ENCODE measurements at regions of chr1 and their contacts with region 1.

Region 1: GRCh38 chr1:228734881-228735801 is at the start of gene RHOU:
- DNase-seq: peak; percentile 58 to 80 (median 72)
- H3K4me3 ChIP-seq: peak within 1 kb of the TSS; percentile 37 to 67
- H3K4me3 Mint-ChIP-seq: peak within 1 kb of the TSS; percentile 89 to 96 (median 92)
- H3K27ac ChIP-seq: peak within 1 kb of the TSS; percentile 37
- H3K27ac Mint-ChIP-seq: peak within 1 kb of the TSS; percentile 8 to 88 (median 81)
- H3K4me1 ChIP-seq: peaks cover 32% of the 10 kb centered on the region
- H3K4me1 Mint-ChIP-seq: peaks cover 18 to 38% (median 29%) of the 10 kb centered on the region in 4 donors
- H3K27me3 ChIP-seq: no peaks in the 10 kb centered on the region
- H3K27me3 Mint-ChIP-seq: peaks cover 0 to 2% of the 10 kb centered on the region in 2 donors
- total RNA-seq, gene RHOU: 3.4 to 4.1 TPM

Region 2: DNA sequence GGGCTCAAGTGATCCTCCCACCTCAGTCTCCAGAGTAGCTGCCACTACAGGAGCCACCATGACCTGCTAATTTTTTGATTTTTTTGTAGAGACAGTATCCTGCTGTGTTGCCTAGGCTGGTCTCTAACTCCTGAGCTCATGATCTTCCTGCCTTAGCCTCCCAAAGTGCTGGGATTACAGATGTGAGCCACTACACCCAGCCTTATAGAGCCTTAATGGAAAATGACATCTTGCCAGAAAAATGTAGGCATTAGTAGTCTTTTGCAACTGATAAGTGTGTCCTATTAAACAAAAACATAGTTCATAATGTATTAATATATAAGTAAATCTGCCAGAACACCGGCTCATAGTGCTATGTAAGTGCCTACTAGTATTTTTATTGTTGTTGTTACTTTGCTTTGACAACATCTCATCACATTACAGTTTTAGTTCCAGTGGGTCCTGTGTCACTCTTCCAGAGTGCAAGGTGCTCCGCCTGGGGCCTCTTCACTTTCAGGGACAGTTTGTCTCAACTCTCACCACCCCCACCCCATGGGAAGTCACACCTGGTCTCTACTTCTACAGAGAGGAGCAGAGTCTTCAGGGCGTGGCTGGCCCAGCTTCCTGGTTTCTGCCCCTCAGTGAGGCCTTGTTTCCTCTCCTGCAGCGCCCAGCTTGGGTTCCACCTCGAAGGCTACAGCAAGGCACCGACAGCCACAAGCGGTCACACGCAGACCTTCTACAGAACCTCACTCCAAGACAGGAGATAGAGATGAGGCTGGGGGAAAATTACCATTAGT is 30.2 kb after region 1 on chr1:
- CTCF ChIA-PET with region 1: interaction called, 3 read pairs
- POLR2A ChIA-PET with region 1: interaction called, 7 read pairs
- intact Hi-C with region 1: loop called (anchors 2 kb)
- DNase-seq: peak in 4 of 5 donors; percentile 13 to 21 (median 18)
- H3K4me3 ChIP-seq: no peak overlapping the region
- H3K4me3 Mint-ChIP-seq: peak overlapping the region in 6 of 8 donors; percentile 25 to 67 (median 48)
- H3K27ac ChIP-seq: no peak overlapping the region
- H3K27ac Mint-ChIP-seq: peak overlapping the region; percentile 43 to 86 (median 76)
- H3K4me1 ChIP-seq: peaks cover 14% of the 10 kb centered on the region
- H3K4me1 Mint-ChIP-seq: peaks cover 8 to 22% (median 17%) of the 10 kb centered on the region in 4 donors
- H3K27me3 ChIP-seq: no peaks in the 10 kb centered on the region
- H3K27me3 Mint-ChIP-seq: no peaks in the 10 kb centered on the region

Region 3: DNA sequence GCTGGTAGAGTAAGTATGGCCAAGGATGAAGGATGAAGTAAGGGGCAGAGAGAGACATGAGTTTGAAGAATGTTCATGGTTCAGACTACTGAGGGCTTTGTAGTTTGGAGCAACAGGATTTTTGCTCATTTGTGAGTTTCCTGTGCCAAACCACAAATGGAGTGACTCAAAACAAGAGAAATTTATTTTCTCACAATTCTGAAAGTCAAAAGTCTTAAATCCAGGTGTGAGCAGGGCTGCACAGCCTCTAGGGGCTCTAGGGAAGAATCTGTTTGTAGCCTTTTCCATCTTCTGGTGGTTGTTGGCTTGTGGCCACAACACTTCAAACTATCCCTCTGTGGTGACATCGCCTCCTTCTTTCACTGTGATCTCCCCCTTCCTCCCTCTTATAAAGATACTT is 59.0 kb after region 1 on chr1:
- CTCF ChIA-PET with region 1: interaction called, 14 read pairs
- POLR2A ChIA-PET with region 1: interaction called, 3 read pairs
- intact Hi-C with region 1: loop called (anchors 5 kb)
- DNase-seq: peak in 4 of 5 donors; percentile 18 to 42 (median 28)
- H3K4me3 ChIP-seq: peak overlapping the region in 1 of 2 donors; percentile 13
- H3K4me3 Mint-ChIP-seq: no peak overlapping the region
- H3K27ac ChIP-seq: no peak overlapping the region
- H3K27ac Mint-ChIP-seq: no peak overlapping the region
- H3K4me1 ChIP-seq: peaks cover 55% of the 10 kb centered on the region
- H3K4me1 Mint-ChIP-seq: peaks cover 13 to 21% (median 16%) of the 10 kb centered on the region in 4 donors
- H3K27me3 ChIP-seq: no peaks in the 10 kb centered on the region
- H3K27me3 Mint-ChIP-seq: no peaks in the 10 kb centered on the region

Region 4: DNA sequence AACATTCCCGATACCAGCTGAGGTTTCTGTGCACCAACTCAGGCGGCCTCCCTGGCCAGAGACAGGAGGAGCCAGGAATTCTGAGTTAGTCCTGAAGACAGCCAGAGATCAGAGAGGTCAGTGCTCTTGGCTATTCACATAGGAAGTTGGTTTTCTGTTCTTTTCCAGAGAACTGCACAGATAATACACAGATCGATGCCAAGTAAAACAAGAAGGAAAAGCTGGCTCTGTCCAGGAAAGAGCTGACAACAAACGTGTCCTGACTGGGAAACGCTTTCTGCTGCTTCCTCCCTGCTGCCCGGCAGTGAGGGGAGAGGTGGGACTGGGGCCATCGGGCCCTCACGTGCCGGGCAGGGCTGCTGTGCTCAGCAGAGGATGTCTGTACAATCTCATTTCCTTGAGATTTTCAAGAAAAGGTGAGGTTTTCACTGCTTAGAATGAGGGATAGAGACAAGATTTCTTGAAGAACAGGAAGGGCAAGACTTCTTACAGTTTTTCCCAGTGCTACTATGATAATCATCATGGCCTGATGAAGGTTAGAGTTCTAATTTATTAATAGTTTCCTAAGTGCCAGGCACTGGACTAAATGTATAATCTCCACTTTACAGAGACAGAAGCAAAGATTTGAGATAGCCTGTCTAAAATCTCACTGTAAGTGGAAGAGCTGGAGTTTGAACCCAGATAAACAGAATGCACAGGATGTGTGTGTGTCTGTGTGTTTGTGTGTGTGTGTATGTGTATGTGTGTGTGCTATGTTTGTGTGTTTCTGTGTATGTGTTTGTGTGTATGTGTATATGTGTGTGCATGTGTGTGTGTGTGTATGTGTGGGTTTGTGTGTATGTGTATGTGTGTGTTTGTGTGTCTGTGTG is 324.8 kb after region 1 on chr1:
- CTCF ChIA-PET with region 1: interaction called, 3 read pairs
- POLR2A ChIA-PET with region 1: interaction called, 3 read pairs
- intact Hi-C with region 1: loop called (anchors 5 kb)
- DNase-seq: no peak
- H3K4me3 ChIP-seq: no peak overlapping the region
- H3K4me3 Mint-ChIP-seq: peak overlapping the region in 7 of 8 donors; percentile 32 to 80 (median 66)
- H3K27ac ChIP-seq: no peak overlapping the region
- H3K27ac Mint-ChIP-seq: peak overlapping the region; percentile 37 to 88 (median 61)
- H3K4me1 ChIP-seq: peaks cover 49% of the 10 kb centered on the region
- H3K4me1 Mint-ChIP-seq: peaks cover 45 to 68% (median 54%) of the 10 kb centered on the region in 4 donors
- H3K27me3 ChIP-seq: no peaks in the 10 kb centered on the region
- H3K27me3 Mint-ChIP-seq: no peaks in the 10 kb centered on the region

Region 5: DNA sequence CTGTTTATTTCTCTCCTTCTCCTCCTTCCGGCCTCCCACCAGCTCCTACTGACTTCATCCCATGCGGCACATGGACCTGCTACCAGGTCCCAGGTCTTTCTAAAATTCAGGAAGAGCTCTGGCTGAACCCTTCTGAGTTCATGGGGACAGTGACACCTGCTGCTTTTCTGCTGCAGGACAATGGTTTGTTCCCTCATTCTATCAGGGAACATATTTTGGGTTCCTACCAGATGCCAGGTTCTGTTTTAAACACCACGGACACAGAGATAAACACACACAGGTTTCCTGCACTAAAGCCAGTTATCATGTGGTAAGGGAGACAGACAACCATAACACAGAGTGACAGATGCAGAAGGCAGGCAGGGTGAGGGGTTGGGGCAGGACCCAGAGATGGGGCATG is 421.7 kb after region 1 on chr1:
- CTCF ChIA-PET with region 1: interaction called, 18 read pairs
- POLR2A ChIA-PET with region 1: interaction called, 5 read pairs
- intact Hi-C with region 1: loop called (anchors 2 kb)
- DNase-seq: no peak
- H3K4me3 ChIP-seq: no peak overlapping the region
- H3K4me3 Mint-ChIP-seq: peak overlapping the region in 3 of 8 donors; percentile 25 to 40 (median 31)
- H3K27ac ChIP-seq: no peak overlapping the region
- H3K27ac Mint-ChIP-seq: peak overlapping the region in 3 of 7 donors; percentile 36 to 81 (median 55)
- H3K4me1 ChIP-seq: peaks cover 27% of the 10 kb centered on the region
- H3K4me1 Mint-ChIP-seq: peaks cover 16 to 41% (median 34%) of the 10 kb centered on the region in 4 donors
- H3K27me3 ChIP-seq: no peaks in the 10 kb centered on the region
- H3K27me3 Mint-ChIP-seq: no peaks in the 10 kb centered on the region

Region 6: DNA sequence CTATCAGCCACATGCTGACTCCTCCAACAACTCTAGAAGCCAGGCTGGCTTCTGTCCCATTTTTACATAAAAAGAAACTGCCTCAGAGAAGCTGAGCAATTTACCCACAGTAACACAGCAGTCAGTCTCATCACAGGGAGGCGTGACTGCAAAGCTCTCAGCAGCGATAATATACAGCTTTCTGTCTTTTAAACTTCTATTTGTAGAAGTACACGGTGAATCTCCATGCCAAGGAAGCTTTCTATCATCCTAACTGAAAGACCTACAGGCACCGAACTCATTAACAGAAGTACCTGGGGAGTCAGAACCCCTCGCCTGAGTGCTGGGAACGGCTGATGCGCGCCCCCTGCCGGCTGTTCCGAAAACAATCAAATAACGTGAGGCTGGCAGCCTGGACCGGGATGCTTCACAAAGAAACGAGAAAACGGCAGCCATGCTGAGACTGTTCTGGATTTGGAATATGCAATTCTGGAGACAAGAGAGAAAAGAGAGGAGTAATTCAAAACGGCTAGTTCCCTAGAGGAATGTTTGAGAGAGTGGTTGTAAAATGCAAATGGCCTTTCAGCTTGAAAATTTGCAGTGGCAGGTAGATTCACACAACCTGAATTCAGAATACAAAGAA is 492.3 kb after region 1 on chr1:
- CTCF ChIA-PET with region 1: interaction called, 166 read pairs
- POLR2A ChIA-PET with region 1: interaction called, 26 read pairs
- intact Hi-C with region 1: loop called (anchors 1 kb)
- DNase-seq: peak; percentile 73 to 81 (median 80)
- H3K4me3 ChIP-seq: no peak overlapping the region
- H3K4me3 Mint-ChIP-seq: peak overlapping the region in 2 of 8 donors; percentile 12 to 53
- H3K27ac ChIP-seq: no peak overlapping the region
- H3K27ac Mint-ChIP-seq: peak overlapping the region in 1 of 7 donors; percentile 11
- H3K4me1 ChIP-seq: peaks cover 10% of the 10 kb centered on the region
- H3K4me1 Mint-ChIP-seq: peaks cover 6 to 16% (median 10%) of the 10 kb centered on the region in 4 donors
- H3K27me3 ChIP-seq: peaks cover 4% of the 10 kb centered on the region
- H3K27me3 Mint-ChIP-seq: no peaks in the 10 kb centered on the region

Region 7: GRCh38 chr1:229341774-229342655 is 606.9 kb after region 1 on chr1:
- CTCF ChIA-PET with region 1: no interaction called
- POLR2A ChIA-PET with region 1: interaction called, 4 read pairs
- intact Hi-C with region 1: loop called (anchors 5 kb)
- DNase-seq: peak in 4 of 5 donors; percentile 85 to 89 (median 86)
- H3K4me3 ChIP-seq: peak overlapping the region; percentile 67 to 76
- H3K4me3 Mint-ChIP-seq: peak overlapping the region; percentile 87 to 95 (median 91)
- H3K27ac ChIP-seq: peak overlapping the region; percentile 68
- H3K27ac Mint-ChIP-seq: peak overlapping the region; percentile 81 to 94 (median 89)
- H3K4me1 ChIP-seq: peaks cover 55% of the 10 kb centered on the region
- H3K4me1 Mint-ChIP-seq: peaks cover 28 to 54% (median 43%) of the 10 kb centered on the region in 4 donors
- H3K27me3 ChIP-seq: no peaks in the 10 kb centered on the region
- H3K27me3 Mint-ChIP-seq: peaks cover 4 to 6% of the 10 kb centered on the region in 2 donors